PC-9 (cell line): ENCODE measurements at regions of chr19 and their contacts with region 1.

Region 1: DNA sequence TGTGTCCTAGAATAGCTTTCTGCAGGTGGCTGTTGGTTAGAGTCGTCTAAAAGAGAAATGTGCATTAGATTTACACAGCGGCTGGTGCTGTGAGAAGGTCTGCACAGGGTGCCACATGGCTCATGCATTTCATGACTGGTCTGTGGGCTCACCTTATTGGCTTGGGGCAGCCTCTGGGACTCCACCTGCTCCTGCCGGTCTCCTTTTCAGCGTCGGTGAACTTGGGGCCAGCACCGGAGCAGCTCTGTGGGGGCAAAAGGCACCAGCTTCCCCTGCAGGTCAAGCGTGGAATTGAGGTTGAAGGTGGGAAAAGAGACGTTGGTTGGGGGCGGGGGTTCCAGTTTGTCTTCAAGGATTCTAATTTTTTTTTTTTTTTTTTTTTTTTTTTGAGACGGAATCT is 3.1 kb upstream of the PNMA8C start:
- DNase-seq: no peak
- H3K4me3 ChIP-seq: no peak overlapping the region
- H3K27ac ChIP-seq: no peak overlapping the region
- H3K4me1 ChIP-seq: no peaks in the 10 kb centered on the region
- H3K27me3 ChIP-seq: peaks cover 83% of the 10 kb centered on the region
- CTCF ChIP-seq: peak; percentile 23; the same call in 1 of the 2 replicates

Region 2: GRCh38 chr19:46107371-46107770 is 324.5 kb before region 1 on chr19:
- CTCF ChIA-PET with region 1: interaction called, 10 read pairs
- POLR2A ChIA-PET with region 1: no interaction called
- intact Hi-C with region 1: no loop called
- DNase-seq: no peak
- H3K4me3 ChIP-seq: no peak overlapping the region
- H3K27ac ChIP-seq: no peak overlapping the region
- H3K4me1 ChIP-seq: no peaks in the 10 kb centered on the region
- H3K27me3 ChIP-seq: no peaks in the 10 kb centered on the region; the same call in 1 of the 2 replicates
- CTCF ChIP-seq: no peak